Astrocyte of the cerebellum (primary cell): ENCODE measurements at regions of chr7 and their contacts with region 1.

Region 1: GRCh38 chr7:73851410-73852234 is 9.3 kb upstream of the METTL27 start:
- DNase-seq: peak; percentile 94
- H3K4me3 ChIP-seq: no peak overlapping the region
- CTCF ChIP-seq: no peak

Region 2: DNA sequence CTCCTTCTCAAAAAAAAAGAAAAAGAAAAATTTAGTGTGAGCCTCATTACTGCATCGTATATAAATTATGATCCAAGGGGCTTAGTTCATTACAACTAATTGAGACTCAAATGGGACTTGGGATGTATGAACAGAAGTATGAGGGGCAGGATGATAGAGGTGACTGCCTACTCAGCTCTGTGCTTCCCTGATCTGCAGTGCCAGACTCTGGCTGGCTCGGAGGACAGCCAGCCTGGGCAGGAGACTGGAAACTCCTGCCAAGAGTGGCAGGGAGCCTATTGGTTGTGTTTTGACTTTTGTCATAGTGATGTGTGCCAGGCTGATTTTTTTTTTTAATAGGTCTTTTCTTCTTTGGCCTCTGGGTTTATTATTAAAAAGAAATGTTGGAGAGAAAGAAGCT is 528.3 kb after region 1 on chr7:
- in situ Hi-C with region 1: loop called (anchors 25 kb)
- DNase-seq: no peak
- H3K4me3 ChIP-seq: no peak overlapping the region
- CTCF ChIP-seq: no peak